ENCODE measurements at regions of chr5 and their contacts with region 1.

Region 1: GRCh38 chr5:52598968-52599367 is 188.7 kb upstream of the ITGA1 start:
- DNase-seq: no peak

Region 2: GRCh38 chr5:52517667-52518066 is 81.3 kb before region 1 on chr5:
- intact Hi-C with region 1: no loop called
- DNase-seq: peak in 2 of 10 donors; percentile 41 to 79

Region 3: DNA sequence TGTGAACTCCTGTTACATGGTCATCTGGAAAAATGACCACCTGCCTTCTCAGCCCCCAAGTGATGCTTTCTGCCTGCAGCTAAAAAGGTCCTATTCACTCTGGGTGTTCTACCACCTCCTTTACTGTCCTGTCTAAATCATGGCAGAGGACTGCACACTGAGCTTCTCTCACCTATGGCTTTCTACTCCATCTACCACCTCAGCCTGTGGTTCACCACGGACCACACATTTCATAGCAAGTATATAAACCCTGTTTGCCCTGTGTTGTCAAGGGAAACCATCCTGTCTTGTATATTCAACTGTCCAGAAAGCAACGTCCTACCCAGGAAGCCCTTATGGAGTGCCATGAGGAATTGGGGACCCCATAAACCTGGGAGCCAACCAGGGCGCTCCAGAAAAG is 21.3 kb after region 1 on chr5:
- intact Hi-C with region 1: loop called (anchors 2 kb)
- DNase-seq: no peak

Region 4: DNA sequence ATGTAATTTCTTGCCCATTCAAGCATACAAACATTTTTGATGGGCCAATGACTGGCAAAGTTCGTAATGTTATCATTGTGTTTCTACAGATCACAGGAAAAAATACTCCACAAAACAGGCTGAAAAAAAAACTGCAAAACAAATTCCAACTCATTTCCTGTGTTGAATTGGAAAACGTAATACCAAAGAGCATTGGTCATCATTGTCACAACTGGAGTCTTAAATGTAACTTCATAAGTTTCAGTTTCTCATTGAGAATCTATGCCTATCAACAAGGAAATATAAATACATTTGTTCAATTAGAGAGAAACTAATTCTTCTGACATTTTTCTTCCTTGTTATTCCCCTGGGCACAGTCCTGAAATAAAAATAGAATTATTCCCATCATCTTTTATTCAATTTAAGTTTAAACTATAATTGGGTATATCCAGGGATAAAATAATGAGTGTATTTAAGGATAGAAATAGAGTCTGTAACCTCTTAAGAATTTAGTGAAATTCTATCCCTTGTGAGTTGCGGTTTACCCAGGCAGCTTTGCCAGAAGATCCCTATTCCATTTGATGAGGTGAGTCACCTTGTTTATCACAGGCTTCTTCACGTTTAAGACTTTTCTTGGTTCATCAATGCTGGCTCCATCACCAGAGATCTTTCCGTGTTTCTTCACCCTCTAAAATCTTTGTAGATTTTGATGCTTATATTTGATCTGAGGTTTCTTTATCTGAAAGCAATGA is 76.0 kb after region 1 on chr5:
- intact Hi-C with region 1: no loop called
- DNase-seq: no peak

Measured in posterior cingulate gyrus (tissue), 11 donors.